GM23248 (cell line): ENCODE measurements at regions of chr1 and their contacts with region 1.

Region 1: GRCh38 chr1:211654838-211655787 is 20.3 kb downstream of the NEK2 start:
- DNase-seq: peak; percentile 93
- H3K4me3 ChIP-seq: 0 out of 2 replicates have a peak overlapping the region, but pooled peaks have one; percentile 36
- H3K27ac ChIP-seq: no peak overlapping the region
- H3K4me1 ChIP-seq: peaks cover 15% of the 10 kb centered on the region
- H3K27me3 ChIP-seq: no peaks in the 10 kb centered on the region

Region 2: DNA sequence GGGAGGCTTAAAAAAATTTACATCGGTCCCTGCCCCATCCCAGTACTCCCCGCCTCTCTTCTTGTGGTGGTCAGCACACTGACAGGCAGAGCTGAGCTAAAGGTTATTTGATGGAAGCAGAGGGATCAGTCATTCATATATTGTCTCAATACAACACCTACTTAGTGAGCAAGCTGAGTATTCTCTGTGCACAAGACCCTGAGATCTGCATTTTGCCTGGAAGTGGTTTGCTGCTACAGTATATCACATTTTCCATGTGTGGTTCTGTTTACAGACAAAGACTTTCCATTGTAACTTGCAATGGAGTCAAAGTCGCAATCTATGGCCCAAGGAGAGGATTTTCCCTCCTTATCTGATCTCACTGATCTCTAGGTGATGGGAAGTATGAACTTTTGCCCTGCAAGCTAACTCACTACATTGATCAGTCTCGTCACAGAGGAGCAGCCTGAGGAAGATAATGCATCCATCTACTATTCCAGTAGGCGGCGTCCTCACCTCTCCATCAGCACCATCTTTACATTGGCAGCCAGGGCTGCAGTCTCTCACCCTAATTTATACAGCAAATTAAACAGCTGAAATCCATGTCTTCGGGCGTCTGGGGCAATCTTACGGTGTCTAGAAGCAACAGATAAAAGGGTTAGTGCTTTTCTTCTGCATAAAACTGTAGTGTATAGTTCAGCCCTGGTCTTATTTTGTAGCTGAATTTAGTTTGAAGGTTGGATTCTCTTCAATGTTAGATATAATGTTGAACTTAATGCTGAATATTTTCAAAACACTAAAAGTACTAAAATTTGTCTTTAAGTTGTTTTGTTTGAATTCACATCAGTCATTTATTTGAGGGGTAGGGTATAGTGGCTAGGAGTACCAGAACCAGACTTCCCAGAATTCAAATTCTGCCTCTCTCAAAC is 331.7 kb before region 1 on chr1:
- in situ Hi-C with region 1: loop called (anchors 10 kb)
- DNase-seq: peak; percentile 82
- H3K4me3 ChIP-seq: no peak overlapping the region
- H3K27ac ChIP-seq: no peak overlapping the region
- H3K4me1 ChIP-seq: no peaks in the 10 kb centered on the region; the same call in 1 of the 2 replicates
- H3K27me3 ChIP-seq: no peaks in the 10 kb centered on the region